Heart right ventricle (tissue), 16 donors: ENCODE measurements at regions of chr18 and their contacts with region 1.

Region 1: GRCh38 chr18:45212181-45213039 is 402.9 kb upstream of the SLC14A2 start:
- DNase-seq: peak; percentile 66 to 87
- ATAC-seq: peak; percentile 92 to 98 (median 96)
- H3K4me3 ChIP-seq: no peak overlapping the region
- H3K27ac ChIP-seq: no peak overlapping the region
- H3K4me1 ChIP-seq: no peaks in the 10 kb centered on the region
- H3K27me3 ChIP-seq: no peaks in the 10 kb centered on the region
- CTCF ChIP-seq: peak in 8 of 9 donors; percentile 71 to 99 (median 92)

Region 2: GRCh38 chr18:43620936-43621335 is 1591.5 kb before region 1 on chr18:
- intact Hi-C with region 1: loop called in 4 of 10 experiments (anchors 5 to 10 kb)
- DNase-seq: no peak
- ATAC-seq: peak in 3 of 8 donors; percentile 27 to 53 (median 45)
- H3K4me3 ChIP-seq: no peak overlapping the region
- H3K27ac ChIP-seq: no peak overlapping the region
- H3K4me1 ChIP-seq: no peaks in the 10 kb centered on the region
- H3K27me3 ChIP-seq: no peaks in the 10 kb centered on the region
- CTCF ChIP-seq: peak in 8 of 9 donors; percentile 19 to 73 (median 61)

Region 3: GRCh38 chr18:43789234-43790000 is 1423.0 kb before region 1 on chr18:
- intact Hi-C with region 1: loop called in 1 of 10 experiments (anchors 10 kb)
- DNase-seq: peak in 1 of 2 donors; percentile 7
- ATAC-seq: peak in 5 of 8 donors; percentile 42 to 77 (median 55)
- H3K4me3 ChIP-seq: no peak overlapping the region
- H3K27ac ChIP-seq: no peak overlapping the region
- H3K4me1 ChIP-seq: peaks cover 0 to 3% (median 0%) of the 10 kb centered on the region in 9 donors
- H3K27me3 ChIP-seq: no peaks in the 10 kb centered on the region
- CTCF ChIP-seq: peak in 7 of 9 donors; percentile 9 to 65 (median 47)

Region 4: GRCh38 chr18:44123743-44124142 is 1088.7 kb before region 1 on chr18:
- intact Hi-C with region 1: loop called in 1 of 10 experiments (anchors 10 kb)
- DNase-seq: no peak
- ATAC-seq: no peak
- H3K4me3 ChIP-seq: no peak overlapping the region
- H3K27ac ChIP-seq: no peak overlapping the region
- H3K4me1 ChIP-seq: no peaks in the 10 kb centered on the region
- H3K27me3 ChIP-seq: no peaks in the 10 kb centered on the region
- CTCF ChIP-seq: no peak

Region 5: DNA sequence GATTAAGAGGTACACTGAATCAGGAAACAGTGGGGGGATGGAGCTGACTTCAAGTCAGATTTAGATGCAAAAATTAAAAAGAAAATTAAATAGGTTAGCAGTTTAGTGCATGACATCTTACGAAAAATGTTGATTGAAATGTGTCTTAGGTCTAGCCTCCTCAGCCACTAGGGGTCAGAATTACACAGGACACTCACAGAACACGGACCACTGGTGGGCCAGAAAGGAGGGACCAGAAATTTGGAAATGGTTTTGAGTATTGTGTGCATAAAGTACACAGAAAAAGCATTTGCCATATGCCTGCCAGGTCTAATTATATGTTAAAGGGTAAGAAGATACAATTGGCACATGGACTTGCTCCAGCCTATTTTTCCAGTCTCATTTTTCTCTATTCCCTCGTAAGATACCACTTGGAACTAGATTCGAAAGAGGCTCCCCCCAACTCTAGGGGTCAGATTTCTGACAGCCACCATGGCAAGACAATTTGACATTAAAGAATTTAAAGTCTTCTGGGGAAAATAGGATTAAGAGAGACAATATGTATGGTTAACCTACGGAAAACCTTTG is 1082.0 kb before region 1 on chr18:
- intact Hi-C with region 1: loop called in 2 of 10 experiments (anchors 10 kb)
- DNase-seq: peak in 1 of 2 donors; percentile 21
- ATAC-seq: peak in 4 of 8 donors; percentile 34 to 53 (median 48)
- H3K4me3 ChIP-seq: no peak overlapping the region
- H3K27ac ChIP-seq: no peak overlapping the region
- H3K4me1 ChIP-seq: no peaks in the 10 kb centered on the region
- H3K27me3 ChIP-seq: no peaks in the 10 kb centered on the region
- CTCF ChIP-seq: peak; percentile 40 to 77 (median 64)

Region 6: DNA sequence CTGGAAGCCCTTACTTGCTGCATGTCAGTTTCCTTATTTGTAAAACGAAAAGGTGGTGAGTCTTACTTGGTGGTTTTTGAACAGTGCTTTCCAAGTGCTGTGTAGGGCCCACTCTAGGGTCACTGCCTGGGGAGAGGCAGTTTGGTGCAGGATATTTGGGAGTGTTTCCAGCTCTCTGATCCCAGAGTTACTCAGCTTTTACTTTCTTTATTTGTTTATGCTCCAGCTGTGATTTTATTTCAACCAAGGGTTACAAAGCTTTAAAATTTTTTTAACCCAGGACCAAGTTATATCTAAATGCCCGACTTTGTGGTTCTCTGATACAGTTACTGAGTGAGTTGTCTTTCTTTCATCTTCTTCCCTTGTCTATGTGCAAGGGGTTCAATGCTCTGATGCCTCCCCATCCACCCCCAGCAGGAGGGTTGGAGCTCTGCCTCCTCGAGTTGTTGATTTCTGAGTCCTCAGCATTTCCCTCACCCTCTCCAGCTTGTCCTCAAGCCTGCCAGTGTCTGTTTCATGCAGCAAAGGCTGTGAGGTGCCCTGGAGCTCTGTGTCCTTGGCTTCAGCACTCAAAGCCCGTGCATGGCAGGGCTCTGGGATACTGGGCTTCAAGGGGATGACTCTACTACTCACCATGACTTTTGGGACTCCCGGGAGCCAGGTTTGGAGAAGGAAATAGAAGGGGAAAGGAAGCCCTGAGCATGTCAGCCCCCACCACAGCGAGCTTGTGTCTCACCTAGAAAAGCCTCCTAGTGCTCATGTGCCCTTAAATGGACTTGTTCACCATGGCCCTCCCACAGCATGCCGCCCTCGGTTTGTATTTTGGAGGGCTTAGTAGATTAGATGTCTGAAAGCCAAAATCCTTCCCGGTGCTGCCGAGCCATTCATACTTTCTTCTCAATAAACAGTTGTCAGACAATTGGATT is 294.9 kb before region 1 on chr18:
- intact Hi-C with region 1: loop called in 1 of 10 experiments (anchors 10 kb)
- DNase-seq: no peak
- ATAC-seq: peak in 5 of 8 donors; percentile 16 to 81 (median 57)
- H3K4me3 ChIP-seq: no peak overlapping the region
- H3K27ac ChIP-seq: peak overlapping the region in 1 of 10 donors; percentile 32
- H3K4me1 ChIP-seq: peaks cover 6 to 32% (median 17%) of the 10 kb centered on the region in 9 donors
- H3K27me3 ChIP-seq: no peaks in the 10 kb centered on the region
- CTCF ChIP-seq: no peak

Region 7: DNA sequence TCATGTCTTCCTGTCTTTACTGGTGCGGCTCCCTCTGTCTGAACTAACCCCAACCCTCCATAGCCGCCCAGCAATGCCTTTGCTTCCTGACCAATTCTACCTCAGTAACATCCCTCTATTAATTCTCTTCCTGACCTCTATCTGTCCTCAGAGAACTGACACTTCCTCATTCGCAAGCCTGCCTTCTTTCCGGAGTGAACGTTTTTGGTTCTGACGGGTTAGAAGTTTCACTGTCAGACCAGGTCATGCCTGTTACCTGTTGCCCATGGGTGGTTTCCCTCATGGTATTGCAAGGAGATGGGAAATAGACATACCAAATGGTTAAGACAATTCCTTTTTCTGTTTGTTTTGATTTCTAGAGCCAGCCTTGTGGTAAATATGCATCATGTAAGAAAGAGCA is 50.6 kb before region 1 on chr18:
- intact Hi-C with region 1: no loop called
- DNase-seq: no peak
- ATAC-seq: no peak
- H3K4me3 ChIP-seq: no peak overlapping the region
- H3K27ac ChIP-seq: no peak overlapping the region
- H3K4me1 ChIP-seq: peaks cover 0 to 26% (median 0%) of the 10 kb centered on the region in 9 donors
- H3K27me3 ChIP-seq: peaks cover 0 to 6% (median 0%) of the 10 kb centered on the region in 7 donors
- CTCF ChIP-seq: no peak